ENCODE measurements at regions of chr16 and their contacts with region 1.

Region 1: GRCh38 chr16:66608241-66609138 is 4.0 kb downstream of the CMTM3 start:
- DNase-seq: peak; percentile 89
- H3K4me3 Mint-ChIP-seq: no peak overlapping the region
- H3K27ac Mint-ChIP-seq: no peak overlapping the region
- H3K4me1 Mint-ChIP-seq: peaks cover 33% of the 10 kb centered on the region
- H3K27me3 Mint-ChIP-seq: no peaks in the 10 kb centered on the region

Region 2: DNA sequence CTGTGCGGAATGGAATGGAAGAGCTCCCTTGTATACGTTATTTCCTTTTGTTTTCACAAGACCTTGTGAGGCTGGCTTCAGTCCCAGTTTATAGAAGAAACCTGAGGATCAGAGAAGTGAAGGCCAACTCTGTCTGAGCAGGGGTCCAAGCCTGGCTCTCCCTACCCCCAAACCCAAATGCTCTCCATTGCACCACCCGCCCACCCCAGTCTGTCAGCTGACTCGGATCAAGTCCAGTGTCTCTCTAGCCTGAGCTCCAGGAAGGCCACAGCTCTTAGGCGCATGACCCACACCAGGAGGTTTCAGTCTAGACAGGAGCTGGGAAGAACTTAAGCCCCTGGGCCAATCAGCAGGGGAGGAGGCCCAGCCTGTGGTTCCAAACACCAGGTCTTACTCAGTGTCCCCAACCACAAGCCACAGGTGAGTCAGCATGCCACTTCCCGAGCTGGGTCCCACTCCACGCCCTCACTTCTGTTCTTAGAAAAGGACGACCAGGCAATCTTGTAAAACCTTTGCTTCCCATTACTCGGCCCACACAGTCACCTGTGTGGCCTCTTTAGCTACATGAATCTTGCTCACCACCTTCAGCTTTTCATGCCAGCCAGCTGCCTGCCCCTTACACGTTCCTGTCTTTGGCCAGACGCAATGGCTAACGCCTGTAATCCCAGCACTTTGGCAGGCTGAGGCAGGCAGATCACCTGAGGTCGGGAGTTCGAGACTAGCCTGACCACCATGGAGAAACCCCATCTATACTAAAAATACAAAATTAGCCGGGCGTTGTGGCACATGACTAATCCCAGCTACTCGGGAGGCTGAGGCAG is 86.3 kb before region 1 on chr16:
- CTCF ChIA-PET with region 1: interaction called, 4 read pairs
- intact Hi-C with region 1: loop called (anchors 1 kb)
- DNase-seq: peak; percentile 98
- H3K4me3 Mint-ChIP-seq: peak overlapping the region; percentile 50
- H3K27ac Mint-ChIP-seq: peak overlapping the region; percentile 89
- H3K4me1 Mint-ChIP-seq: peaks cover 72% of the 10 kb centered on the region
- H3K27me3 Mint-ChIP-seq: no peaks in the 10 kb centered on the region

Region 3: DNA sequence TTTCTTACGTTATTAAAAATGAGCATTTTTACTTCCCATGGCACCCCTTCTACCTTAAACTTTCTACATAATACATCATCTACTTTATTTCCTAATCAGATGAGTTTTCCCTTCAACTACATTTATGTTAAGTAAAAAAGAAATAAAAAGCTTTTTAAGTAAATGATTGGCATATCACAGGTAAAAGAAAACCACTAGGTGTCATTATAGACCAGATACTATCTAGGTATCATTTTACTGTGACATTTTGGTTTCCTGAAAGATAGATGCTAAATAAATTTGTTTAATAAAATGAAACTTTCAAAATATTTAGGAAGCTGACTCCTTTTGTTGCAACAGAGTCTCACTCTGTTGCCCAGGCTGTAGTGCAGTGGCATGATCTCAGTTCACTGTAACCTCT is 46.1 kb before region 1 on chr16:
- CTCF ChIA-PET with region 1: interaction called, 14 read pairs
- intact Hi-C with region 1: loop called (anchors 1 kb)
- DNase-seq: no peak
- H3K4me3 Mint-ChIP-seq: no peak overlapping the region
- H3K27ac Mint-ChIP-seq: no peak overlapping the region
- H3K4me1 Mint-ChIP-seq: peaks cover 55% of the 10 kb centered on the region
- H3K27me3 Mint-ChIP-seq: no peaks in the 10 kb centered on the region

Region 4: GRCh38 chr16:66618588-66619375 is 10.3 kb after region 1 on chr16:
- CTCF ChIA-PET with region 1: interaction called, 10 read pairs
- intact Hi-C with region 1: no loop called
- DNase-seq: no peak
- H3K4me3 Mint-ChIP-seq: no peak overlapping the region
- H3K27ac Mint-ChIP-seq: no peak overlapping the region
- H3K4me1 Mint-ChIP-seq: peaks cover 2% of the 10 kb centered on the region
- H3K27me3 Mint-ChIP-seq: no peaks in the 10 kb centered on the region

Region 5: DNA sequence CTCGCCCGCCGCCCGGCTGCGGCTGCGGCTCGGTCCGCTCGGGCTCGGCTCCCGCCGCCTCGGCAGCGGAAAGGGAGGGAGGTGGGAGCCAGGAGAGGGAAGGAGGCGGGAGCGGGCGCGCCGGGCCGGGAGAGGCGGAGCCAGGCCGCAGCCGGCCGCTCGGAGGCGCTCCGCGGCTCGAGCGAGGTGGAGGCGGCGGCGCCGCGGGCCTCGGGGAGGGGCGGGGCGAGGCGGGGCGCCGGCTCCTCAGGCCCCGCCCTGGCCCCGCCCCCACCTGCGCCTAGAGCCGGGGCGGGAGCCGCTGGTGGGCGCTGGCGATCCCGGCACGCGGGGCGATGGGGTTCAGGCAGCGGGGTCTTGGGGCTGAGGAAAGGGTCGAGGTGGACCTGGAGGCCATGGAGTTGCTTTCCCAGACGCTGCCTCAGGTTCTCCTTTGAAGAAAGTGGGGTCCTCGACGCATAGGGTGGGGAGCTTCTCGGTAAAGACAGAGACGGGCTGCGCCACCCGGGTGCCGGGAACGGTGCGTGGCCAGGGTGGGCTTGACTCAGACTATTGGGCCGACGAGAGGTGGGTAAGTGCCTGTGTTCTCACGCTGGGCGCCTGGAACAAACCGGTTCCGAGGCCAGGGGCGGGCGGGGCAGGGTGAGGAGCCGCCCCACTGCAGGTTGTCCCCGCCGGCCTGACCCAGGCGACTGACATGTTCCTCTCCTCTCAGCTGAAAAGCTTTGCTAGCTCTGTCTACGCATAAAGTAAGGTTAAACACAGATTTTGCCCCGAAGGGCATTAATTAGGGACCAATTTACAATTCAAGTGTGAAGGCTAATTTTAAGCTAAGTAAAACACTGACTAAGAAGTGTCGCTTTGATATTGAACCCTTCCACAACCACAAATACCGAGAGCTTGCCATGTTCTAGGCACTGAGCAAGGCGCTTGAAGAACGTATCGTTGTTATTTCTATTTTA is 88.5 kb after region 1 on chr16 and contains the start of gene CMTM4:
- CTCF ChIA-PET with region 1: interaction called, 3 read pairs
- intact Hi-C with region 1: loop called (anchors 1 kb)
- DNase-seq: peak; percentile 78
- H3K4me3 Mint-ChIP-seq: peak within 1 kb of the TSS; percentile 76
- H3K27ac Mint-ChIP-seq: no peak within 1 kb of the TSS
- H3K4me1 Mint-ChIP-seq: peaks cover 4% of the 10 kb centered on the region
- H3K27me3 Mint-ChIP-seq: peaks cover 6% of the 10 kb centered on the region
- total RNA-seq, gene CMTM4: 4.6 to 4.7 TPM

Region 6: GRCh38 chr16:66751303-66751991 is 143.0 kb after region 1 on chr16 and contains the start of gene DYNC1LI2:
- CTCF ChIA-PET with region 1: interaction called, 3 read pairs
- intact Hi-C with region 1: loop called (anchors 1 kb)
- DNase-seq: peak; percentile 82
- H3K4me3 Mint-ChIP-seq: peak within 1 kb of the TSS; percentile 88
- H3K27ac Mint-ChIP-seq: peak within 1 kb of the TSS; percentile 78
- H3K4me1 Mint-ChIP-seq: peaks cover 36% of the 10 kb centered on the region
- H3K27me3 Mint-ChIP-seq: peaks cover 3% of the 10 kb centered on the region
- total RNA-seq, gene DYNC1LI2: 30.8 to 31.0 TPM

Region 7: GRCh38 chr16:66844342-66845079 is 236.0 kb after region 1 on chr16 and contains the start of gene CA7:
- CTCF ChIA-PET with region 1: no interaction called
- intact Hi-C with region 1: no loop called
- DNase-seq: no peak
- H3K4me3 Mint-ChIP-seq: peak within 1 kb of the TSS; percentile 39
- H3K27ac Mint-ChIP-seq: no peak within 1 kb of the TSS
- H3K4me1 Mint-ChIP-seq: peaks cover 5% of the 10 kb centered on the region
- H3K27me3 Mint-ChIP-seq: peaks cover 32% of the 10 kb centered on the region
- total RNA-seq, gene CA7: not detected

Measured in activated naive CD4-positive, alpha-beta T cell treated with anti-CD3 and anti-CD28 coated beads for 36 hours (primary cell).